ENCODE measurements at regions of chr12 and their contacts with region 1.

Region 1: GRCh38 chr12:94459728-94460615 is at the start of gene CEP83:
- DNase-seq: peak; percentile 89 to 99 (median 98)
- ATAC-seq: peak; percentile 97
- H3K4me3 ChIP-seq: peak within 1 kb of the TSS; percentile 96
- H3K4me3 Mint-ChIP-seq: peak within 1 kb of the TSS; percentile 94
- H3K27ac ChIP-seq: peak within 1 kb of the TSS; percentile 69 to 87
- H3K27ac Mint-ChIP-seq: peak within 1 kb of the TSS; percentile 92
- H3K4me1 ChIP-seq: peaks cover 10% of the 10 kb centered on the region
- H3K4me1 Mint-ChIP-seq: peaks cover 31% of the 10 kb centered on the region
- H3K27me3 ChIP-seq: no peaks in the 10 kb centered on the region
- H3K27me3 Mint-ChIP-seq: peaks cover 8% of the 10 kb centered on the region
- CTCF ChIP-seq: no peak
- total RNA-seq, gene CEP83: 9.4 to 12.1 TPM

Region 2: GRCh38 chr12:93378373-93379325 is 1081.3 kb before region 1 on chr12:
- CTCF ChIA-PET with region 1: no interaction called
- POLR2A ChIA-PET with region 1: no interaction called
- intact Hi-C with region 1: loop called in 1 of 2 experiments (anchors 10 kb)
- DNase-seq: peak; percentile 33 to 86 (median 47)
- ATAC-seq: peak; percentile 54
- H3K4me3 ChIP-seq: peak overlapping the region; percentile 74
- H3K4me3 Mint-ChIP-seq: peak overlapping the region; percentile 100
- H3K27ac ChIP-seq: peak overlapping the region; percentile 85 to 88
- H3K27ac Mint-ChIP-seq: peak overlapping the region; percentile 99
- H3K4me1 ChIP-seq: peaks cover 36% of the 10 kb centered on the region
- H3K4me1 Mint-ChIP-seq: peaks cover 52% of the 10 kb centered on the region
- H3K27me3 ChIP-seq: no peaks in the 10 kb centered on the region
- H3K27me3 Mint-ChIP-seq: no peaks in the 10 kb centered on the region
- CTCF ChIP-seq: no peak

Region 3: DNA sequence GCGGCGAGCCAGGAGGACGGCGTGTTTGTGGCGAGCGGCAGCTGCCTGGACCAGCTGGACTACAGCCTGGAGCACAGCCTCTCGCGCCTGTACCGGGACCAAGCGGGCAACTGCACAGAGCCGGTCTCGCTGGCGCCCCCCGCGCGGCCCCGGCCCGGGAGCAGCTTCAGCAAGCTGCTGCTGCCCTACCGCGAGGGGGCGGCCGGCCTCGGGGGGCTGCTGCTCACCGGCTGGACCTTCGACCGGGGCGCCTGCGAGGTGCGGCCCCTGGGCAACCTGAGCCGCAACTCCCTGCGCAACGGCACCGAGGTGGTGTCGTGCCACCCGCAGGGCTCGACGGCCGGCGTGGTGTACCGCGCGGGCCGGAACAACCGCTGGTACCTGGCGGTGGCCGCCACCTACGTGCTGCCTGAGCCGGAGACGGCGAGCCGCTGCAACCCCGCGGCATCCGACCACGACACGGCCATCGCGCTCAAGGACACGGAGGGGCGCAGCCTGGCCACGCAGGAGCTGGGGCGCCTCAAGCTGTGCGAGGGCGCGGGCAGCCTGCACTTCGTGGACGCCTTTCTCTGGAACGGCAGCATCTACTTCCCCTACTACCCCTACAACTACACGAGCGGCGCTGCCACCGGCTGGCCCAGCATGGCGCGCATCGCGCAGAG is 310.7 kb before region 1 on chr12:
- CTCF ChIA-PET with region 1: no interaction called
- POLR2A ChIA-PET with region 1: interaction called, 3 read pairs
- intact Hi-C with region 1: loop called in 1 of 2 experiments (anchors 5 kb)
- DNase-seq: peak in 13 of 14 experiments; percentile 7 to 70 (median 33)
- ATAC-seq: peak; percentile 33
- H3K4me3 ChIP-seq: peak overlapping the region; percentile 57
- H3K4me3 Mint-ChIP-seq: peak overlapping the region; percentile 89
- H3K27ac ChIP-seq: no peak overlapping the region
- H3K27ac Mint-ChIP-seq: no peak overlapping the region
- H3K4me1 ChIP-seq: peaks cover 29% of the 10 kb centered on the region
- H3K4me1 Mint-ChIP-seq: peaks cover 38% of the 10 kb centered on the region
- H3K27me3 ChIP-seq: no peaks in the 10 kb centered on the region
- H3K27me3 Mint-ChIP-seq: no peaks in the 10 kb centered on the region
- CTCF ChIP-seq: peak; percentile 47

Region 4: DNA sequence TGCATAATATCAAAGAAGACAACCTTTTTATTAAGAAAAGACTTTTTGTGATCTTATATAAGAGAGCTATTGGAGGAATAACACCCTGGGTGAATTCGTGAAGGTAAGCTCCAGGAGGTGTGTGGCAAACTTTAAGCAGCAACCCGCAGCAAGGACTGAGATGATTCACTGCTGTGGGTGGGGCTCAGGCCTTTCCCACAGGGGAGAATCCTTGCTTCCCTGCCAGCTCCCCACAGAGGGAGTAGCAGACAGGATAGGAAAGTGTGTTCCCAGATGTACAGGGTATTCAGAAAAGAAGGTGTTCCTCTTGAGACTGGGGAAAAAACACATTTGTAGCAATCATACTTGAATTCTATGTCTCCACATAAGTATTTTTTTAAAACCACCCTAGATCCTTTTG is 534.3 kb after region 1 on chr12:
- CTCF ChIA-PET with region 1: no interaction called
- POLR2A ChIA-PET with region 1: no interaction called
- intact Hi-C with region 1: loop called in 1 of 2 experiments (anchors 5 kb)
- DNase-seq: no peak
- ATAC-seq: no peak
- H3K4me3 ChIP-seq: no peak overlapping the region
- H3K4me3 Mint-ChIP-seq: no peak overlapping the region
- H3K27ac ChIP-seq: no peak overlapping the region
- H3K27ac Mint-ChIP-seq: no peak overlapping the region
- H3K4me1 ChIP-seq: peaks cover 20% of the 10 kb centered on the region
- H3K4me1 Mint-ChIP-seq: peaks cover 53% of the 10 kb centered on the region
- H3K27me3 ChIP-seq: no peaks in the 10 kb centered on the region
- H3K27me3 Mint-ChIP-seq: no peaks in the 10 kb centered on the region
- CTCF ChIP-seq: no peak

Region 5: DNA sequence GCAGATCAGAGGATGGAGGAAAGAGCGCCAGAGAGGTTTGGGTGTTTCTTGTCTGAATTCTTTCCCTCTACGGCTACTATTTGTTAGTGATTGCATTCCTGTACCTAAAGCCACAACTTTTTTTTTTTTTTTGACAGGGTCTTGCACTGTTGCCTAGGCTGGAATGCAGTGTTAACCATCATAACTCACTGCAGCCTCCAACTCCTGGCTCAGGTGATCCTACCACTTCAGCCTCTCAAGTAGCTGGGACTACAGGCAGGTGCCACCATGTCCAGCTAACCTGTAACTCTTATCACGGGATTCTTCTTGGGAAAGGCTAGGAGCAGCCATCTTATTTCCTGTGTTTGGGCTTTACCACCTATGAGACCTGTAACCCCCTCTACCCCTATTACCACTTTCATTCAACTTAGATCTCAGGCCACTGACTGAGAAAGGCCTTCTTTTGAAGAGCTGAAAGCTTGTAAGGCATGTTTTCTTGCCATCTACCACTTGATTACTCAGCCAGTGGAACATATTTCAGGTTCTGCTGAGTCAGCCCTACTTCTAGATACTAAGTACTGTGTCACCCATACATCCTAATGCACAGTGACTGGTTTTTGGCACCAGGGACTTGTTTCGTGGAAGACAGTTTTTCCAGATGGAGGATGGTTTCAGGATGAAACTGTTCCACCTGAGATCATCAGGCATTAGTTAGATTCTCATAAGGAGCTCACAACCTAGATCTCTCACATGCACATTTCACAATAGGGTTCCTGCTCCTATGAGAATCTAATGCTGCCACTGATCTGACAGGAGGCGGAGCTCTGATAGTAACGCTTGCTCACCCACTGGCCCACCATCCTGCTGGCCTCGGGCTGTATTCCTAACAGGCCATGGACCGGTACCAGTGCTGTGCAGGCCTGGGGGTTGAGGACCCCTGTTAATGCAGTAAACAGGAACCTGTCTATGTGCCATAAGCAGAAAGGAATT is 764.5 kb after region 1 on chr12:
- CTCF ChIA-PET with region 1: no interaction called
- POLR2A ChIA-PET with region 1: no interaction called
- intact Hi-C with region 1: loop called in 1 of 2 experiments (anchors 5 kb)
- DNase-seq: no peak
- ATAC-seq: no peak
- H3K4me3 ChIP-seq: no peak overlapping the region
- H3K4me3 Mint-ChIP-seq: no peak overlapping the region
- H3K27ac ChIP-seq: no peak overlapping the region
- H3K27ac Mint-ChIP-seq: no peak overlapping the region
- H3K4me1 ChIP-seq: peaks cover 9% of the 10 kb centered on the region
- H3K4me1 Mint-ChIP-seq: peaks cover 63% of the 10 kb centered on the region
- H3K27me3 ChIP-seq: no peaks in the 10 kb centered on the region
- H3K27me3 Mint-ChIP-seq: no peaks in the 10 kb centered on the region
- CTCF ChIP-seq: no peak

Region 6: DNA sequence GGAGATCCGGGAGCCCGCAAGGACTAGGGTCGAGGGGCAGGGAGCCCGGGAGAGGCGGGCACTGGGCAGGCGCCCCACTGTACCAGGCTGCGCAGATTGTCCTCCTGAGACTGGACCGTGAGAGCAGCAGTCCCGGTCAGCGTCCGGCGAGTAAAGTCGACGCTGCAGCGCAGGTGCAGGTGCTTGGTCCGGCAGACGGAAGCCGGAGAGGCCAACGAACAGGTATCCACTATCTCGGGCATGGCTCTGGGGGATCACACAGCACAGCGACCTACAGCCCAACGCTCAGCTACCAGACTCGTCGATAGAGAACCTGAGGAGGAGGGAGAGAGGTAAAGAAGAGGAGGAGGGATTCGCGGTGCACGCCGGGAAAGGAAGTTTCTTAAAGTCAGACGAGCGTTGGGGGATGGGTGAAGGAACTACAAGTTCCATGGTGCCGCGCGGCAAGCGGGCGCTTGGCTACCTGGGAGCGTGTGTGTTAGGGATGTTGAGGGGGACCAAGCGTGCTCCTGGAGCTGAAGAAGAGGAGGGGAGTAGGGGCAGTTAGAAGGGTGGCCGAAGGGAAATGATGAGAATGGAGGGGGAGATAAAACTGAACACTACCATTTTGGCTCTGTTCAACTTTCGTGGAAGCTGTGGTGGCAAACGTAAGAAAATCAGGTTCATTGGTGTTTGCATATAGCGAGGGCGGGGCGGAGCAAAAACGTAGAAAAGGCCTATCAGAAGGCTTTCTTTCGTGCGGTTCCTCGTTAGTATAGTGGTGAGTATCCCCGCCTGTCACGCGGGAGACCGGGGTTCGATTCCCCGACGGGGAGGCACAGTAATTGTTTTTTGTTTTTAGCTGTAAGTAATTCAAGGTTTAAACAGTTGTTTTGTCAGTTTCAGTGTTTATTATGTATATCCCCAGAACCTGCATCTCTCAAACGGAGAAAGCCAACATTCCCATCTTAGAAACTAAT is 1575.6 kb after region 1 on chr12 and contains the start of gene LTA4H:
- CTCF ChIA-PET with region 1: no interaction called
- POLR2A ChIA-PET with region 1: no interaction called
- intact Hi-C with region 1: loop called in 1 of 2 experiments (anchors 10 kb)
- DNase-seq: peak; percentile 92 to 99 (median 96)
- ATAC-seq: peak; percentile 93
- H3K4me3 ChIP-seq: peak within 1 kb of the TSS; percentile 89
- H3K4me3 Mint-ChIP-seq: no peak within 1 kb of the TSS
- H3K27ac ChIP-seq: peak within 1 kb of the TSS; percentile 59 to 60
- H3K27ac Mint-ChIP-seq: no peak within 1 kb of the TSS
- H3K4me1 ChIP-seq: peaks cover 20% of the 10 kb centered on the region
- H3K4me1 Mint-ChIP-seq: peaks cover 11% of the 10 kb centered on the region
- H3K27me3 ChIP-seq: no peaks in the 10 kb centered on the region
- H3K27me3 Mint-ChIP-seq: no peaks in the 10 kb centered on the region
- CTCF ChIP-seq: no peak
- total RNA-seq, gene LTA4H: 43.0 to 44.0 TPM